ENCODE measurements at regions of chr1 and their contacts with region 1.

Region 1: GRCh38 chr1:45303582-45304310 is 22.9 kb upstream of the HPDL start:
- DNase-seq: peak; percentile 93 to 97
- H3K4me3 ChIP-seq: peak overlapping the region; percentile 78
- H3K4me3 Mint-ChIP-seq: peak overlapping the region; percentile 77
- H3K27ac Mint-ChIP-seq: peak overlapping the region; percentile 87
- H3K4me1 ChIP-seq: peaks cover 7% of the 10 kb centered on the region; the same call in 1 of the 2 replicates
- H3K4me1 Mint-ChIP-seq: peaks cover 22% of the 10 kb centered on the region
- H3K27me3 ChIP-seq: no peaks in the 10 kb centered on the region
- H3K27me3 Mint-ChIP-seq: no peaks in the 10 kb centered on the region
- CTCF ChIP-seq: peak; percentile 47 to 68

Region 2: DNA sequence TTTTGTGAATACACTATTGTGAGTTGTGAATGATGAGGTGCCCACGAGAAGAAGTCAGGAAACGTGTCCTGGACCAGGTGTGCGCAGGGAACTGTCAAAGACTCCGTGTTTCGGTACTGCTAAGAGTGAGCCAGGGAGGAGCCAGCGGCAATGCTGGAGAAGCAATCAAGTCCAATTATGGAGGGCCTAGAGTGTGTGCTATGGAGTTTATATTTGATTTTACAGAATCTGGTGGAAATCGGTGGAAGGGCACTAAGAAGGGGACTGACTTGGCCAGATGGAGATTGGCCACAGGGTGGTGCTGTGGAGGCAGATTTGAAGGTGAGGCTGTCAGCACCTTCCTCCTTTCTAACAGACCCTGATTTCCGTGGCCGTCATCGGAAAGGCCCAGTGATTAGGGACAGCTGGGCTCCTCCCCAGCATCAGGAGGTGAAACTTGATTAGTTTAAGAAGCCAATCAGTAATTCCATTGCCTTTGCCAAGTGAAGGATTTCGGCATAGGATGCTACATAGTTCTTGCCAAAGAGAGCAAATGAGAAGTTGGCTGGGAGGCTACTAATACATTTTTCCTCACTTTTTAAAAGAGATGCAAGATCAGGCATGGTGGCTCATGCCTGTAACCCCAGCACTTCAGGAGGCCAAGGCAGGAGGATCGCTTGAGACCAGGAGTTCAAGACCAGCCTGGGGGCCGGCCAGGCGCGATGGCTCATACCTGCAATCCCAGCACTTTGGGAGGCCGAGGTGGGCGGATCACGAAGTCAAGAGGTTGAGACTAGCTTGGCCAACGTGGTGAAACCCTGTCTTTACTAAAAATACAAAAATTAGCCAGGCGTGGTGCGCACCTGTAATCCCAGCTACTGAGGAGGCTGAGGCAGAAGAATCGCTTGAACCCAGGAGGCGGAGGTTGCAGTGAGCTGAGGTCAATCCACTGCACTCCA is 467.7 kb before region 1 on chr1:
- CTCF ChIA-PET with region 1: no interaction called
- POLR2A ChIA-PET with region 1: no interaction called
- intact Hi-C with region 1: loop called (anchors 10 kb)
- DNase-seq: peak; percentile 79 to 83
- H3K4me3 ChIP-seq: no peak overlapping the region
- H3K4me3 Mint-ChIP-seq: no peak overlapping the region
- H3K27ac Mint-ChIP-seq: no peak overlapping the region
- H3K4me1 ChIP-seq: no peaks in the 10 kb centered on the region
- H3K4me1 Mint-ChIP-seq: no peaks in the 10 kb centered on the region
- H3K27me3 ChIP-seq: no peaks in the 10 kb centered on the region
- H3K27me3 Mint-ChIP-seq: no peaks in the 10 kb centered on the region
- CTCF ChIP-seq: peak; percentile 70 to 82

Region 3: DNA sequence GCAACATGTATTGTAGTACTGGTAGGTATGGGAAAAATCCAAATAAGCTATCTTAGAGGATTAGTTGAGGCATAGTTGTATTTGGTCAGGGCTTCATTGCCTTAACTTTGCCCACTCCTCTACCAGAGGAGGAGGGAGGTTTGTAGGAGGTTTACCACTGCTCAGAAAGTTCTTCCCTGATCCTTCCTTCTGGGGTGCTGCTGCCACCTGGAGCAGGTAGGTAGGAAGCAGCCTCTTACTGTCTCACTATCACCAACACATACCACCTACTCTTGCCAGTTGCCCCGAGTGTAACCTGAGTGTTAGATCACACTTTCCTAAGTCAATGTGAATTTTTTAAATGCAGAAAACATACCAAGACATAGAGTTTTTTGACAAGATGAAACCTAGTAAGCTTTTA is 73.2 kb before region 1 on chr1:
- CTCF ChIA-PET with region 1: no interaction called
- POLR2A ChIA-PET with region 1: interaction called, 3 read pairs
- intact Hi-C with region 1: loop called (anchors 1 kb)
- DNase-seq: peak; percentile 27 to 40
- H3K4me3 ChIP-seq: no peak overlapping the region
- H3K4me3 Mint-ChIP-seq: no peak overlapping the region
- H3K27ac Mint-ChIP-seq: no peak overlapping the region
- H3K4me1 ChIP-seq: no peaks in the 10 kb centered on the region
- H3K4me1 Mint-ChIP-seq: no peaks in the 10 kb centered on the region
- H3K27me3 ChIP-seq: no peaks in the 10 kb centered on the region
- H3K27me3 Mint-ChIP-seq: peaks cover 3% of the 10 kb centered on the region
- CTCF ChIP-seq: peak; percentile 20 to 53

Region 4: GRCh38 chr1:45339789-45340570 is 36.2 kb after region 1 on chr1 and contains the starts of genes MUTYH and TOE1:
- CTCF ChIA-PET with region 1: interaction called, 21 read pairs
- POLR2A ChIA-PET with region 1: interaction called, 43 read pairs
- intact Hi-C with region 1: loop called (anchors 1 kb)
- DNase-seq: peak; percentile 96
- H3K4me3 ChIP-seq: peak within 1 kb of the TSS; percentile 67
- H3K4me3 Mint-ChIP-seq: peak within 1 kb of the TSS; percentile 99
- H3K27ac Mint-ChIP-seq: peak within 1 kb of the TSS; percentile 99
- H3K4me1 ChIP-seq: peaks cover 39% of the 10 kb centered on the region
- H3K4me1 Mint-ChIP-seq: peaks cover 43% of the 10 kb centered on the region
- H3K27me3 ChIP-seq: no peaks in the 10 kb centered on the region
- H3K27me3 Mint-ChIP-seq: no peaks in the 10 kb centered on the region
- CTCF ChIP-seq: no peak
- total RNA-seq, gene MUTYH: 46.3 and 48.4 TPM in 2 replicates
- total RNA-seq, gene TOE1: 15.5 and 19.0 TPM in 2 replicates

Region 5: GRCh38 chr1:45521398-45522323 is 217.9 kb after region 1 on chr1 and contains the start of gene PRDX1:
- CTCF ChIA-PET with region 1: no interaction called
- POLR2A ChIA-PET with region 1: interaction called, 16 read pairs
- intact Hi-C with region 1: no loop called
- DNase-seq: peak; percentile 96 to 97
- H3K4me3 ChIP-seq: peak within 1 kb of the TSS; percentile 75
- H3K4me3 Mint-ChIP-seq: peak within 1 kb of the TSS; percentile 82
- H3K27ac Mint-ChIP-seq: peak within 1 kb of the TSS; percentile 98
- H3K4me1 ChIP-seq: peaks cover 46% of the 10 kb centered on the region
- H3K4me1 Mint-ChIP-seq: peaks cover 28% of the 10 kb centered on the region
- H3K27me3 ChIP-seq: no peaks in the 10 kb centered on the region
- H3K27me3 Mint-ChIP-seq: no peaks in the 10 kb centered on the region
- CTCF ChIP-seq: peak in 1 of 2 experiments; percentile 1
- total RNA-seq, gene PRDX1: 637 and 684 TPM in 2 replicates